ENCODE measurements at regions of chr3 and their contacts with region 1.

Region 1: DNA sequence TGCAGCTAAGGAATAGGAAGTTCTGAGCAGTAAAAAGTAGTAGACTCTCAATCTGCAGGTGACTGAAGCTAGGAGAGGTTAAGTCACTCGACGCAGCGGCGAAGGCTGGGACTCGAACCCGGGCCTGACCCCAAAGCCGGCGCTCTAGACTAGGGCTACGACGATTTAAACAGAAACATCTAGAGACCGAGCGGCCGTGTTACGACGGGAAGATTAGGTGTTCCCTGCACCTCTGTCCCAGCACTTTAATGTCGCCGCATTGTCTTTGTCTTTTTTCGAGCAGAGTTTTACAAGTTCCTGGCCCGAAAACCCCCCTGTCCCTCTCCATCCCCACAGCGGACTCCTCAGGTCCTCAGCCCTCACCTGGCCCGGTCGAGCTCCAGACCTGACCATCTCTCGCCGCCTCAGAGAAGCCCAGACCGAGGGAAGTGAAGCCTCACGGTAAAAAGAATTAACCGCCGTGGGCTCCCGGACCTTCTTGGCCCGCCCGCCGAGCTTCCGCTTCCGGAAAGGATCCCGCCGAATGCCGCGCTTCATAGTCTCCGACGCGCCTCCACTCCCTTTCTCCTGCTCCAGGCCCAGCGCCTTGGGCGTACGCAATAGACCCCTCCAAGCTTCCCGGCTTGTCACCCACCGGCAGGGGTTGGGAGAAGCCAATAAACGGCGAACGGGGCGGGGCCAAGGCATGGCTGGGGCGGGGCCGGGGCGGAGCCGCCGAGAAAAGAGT is at the start of gene CCDC14:
- DNase-seq: peak; percentile 92
- ATAC-seq: peak; percentile 99
- H3K4me3 ChIP-seq: peak within 1 kb of the TSS; percentile 69 to 92 (median 83)
- H3K27ac ChIP-seq: peak within 1 kb of the TSS; percentile 82
- H3K4me1 ChIP-seq: peaks cover 47% of the 10 kb centered on the region
- H3K27me3 ChIP-seq: peaks cover 0 to 3% of the 10 kb centered on the region in 2 experiments; a peak in 1 of 5 replicates
- CTCF ChIP-seq: no peak
- EP300 ChIP-seq: no peak
- POLR2A ChIP-seq: peak; percentile 73 to 75
- RAD21 ChIP-seq: no peak
- total RNA-seq, gene CCDC14: 21.1 and 48.7 TPM in 2 replicates

Region 2: DNA sequence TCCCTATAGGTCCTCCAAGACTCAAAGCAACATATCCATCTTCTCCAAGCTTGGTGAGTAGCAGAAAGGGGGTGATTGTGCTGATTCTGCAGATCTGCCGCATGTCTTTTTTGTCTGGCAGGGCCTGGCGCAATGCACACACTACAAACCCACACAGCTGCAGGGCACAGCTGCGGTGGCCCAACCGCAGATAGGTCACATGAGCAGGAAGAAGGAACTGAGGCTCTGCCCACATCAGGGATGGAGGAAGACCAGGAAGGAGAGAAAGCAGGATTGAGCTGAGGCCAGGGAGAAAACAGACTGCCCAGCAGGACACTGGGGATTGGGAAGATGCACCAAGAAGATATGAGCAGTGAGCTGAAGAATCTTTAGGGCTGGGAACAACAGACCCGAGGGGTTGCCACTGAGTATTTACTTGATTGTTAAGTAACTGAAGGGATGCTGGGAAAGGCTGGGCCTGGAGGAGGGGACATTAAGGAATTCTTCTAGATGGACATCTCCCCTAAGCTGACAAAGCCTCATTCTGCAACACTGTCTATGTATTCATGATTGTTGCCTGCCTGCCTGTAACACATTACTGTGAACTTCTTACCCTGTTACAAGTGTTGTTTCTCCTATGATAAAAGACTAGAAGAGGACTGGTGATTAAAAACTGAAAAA is 203.5 kb before region 1 on chr3:
- CTCF ChIA-PET with region 1: no interaction called
- POLR2A ChIA-PET with region 1: no interaction called
- in situ Hi-C with region 1: no loop called
- intact Hi-C with region 1: loop called (anchors 10 kb)
- DNase-seq: no peak
- ATAC-seq: no peak
- H3K4me3 ChIP-seq: no peak overlapping the region; a peak in 1 of 6 replicates
- H3K27ac ChIP-seq: peak overlapping the region; percentile 90
- H3K4me1 ChIP-seq: peaks cover 89% of the 10 kb centered on the region
- H3K27me3 ChIP-seq: no peaks in the 10 kb centered on the region
- CTCF ChIP-seq: no peak
- EP300 ChIP-seq: no peak
- POLR2A ChIP-seq: no peak
- RAD21 ChIP-seq: no peak

Region 3: DNA sequence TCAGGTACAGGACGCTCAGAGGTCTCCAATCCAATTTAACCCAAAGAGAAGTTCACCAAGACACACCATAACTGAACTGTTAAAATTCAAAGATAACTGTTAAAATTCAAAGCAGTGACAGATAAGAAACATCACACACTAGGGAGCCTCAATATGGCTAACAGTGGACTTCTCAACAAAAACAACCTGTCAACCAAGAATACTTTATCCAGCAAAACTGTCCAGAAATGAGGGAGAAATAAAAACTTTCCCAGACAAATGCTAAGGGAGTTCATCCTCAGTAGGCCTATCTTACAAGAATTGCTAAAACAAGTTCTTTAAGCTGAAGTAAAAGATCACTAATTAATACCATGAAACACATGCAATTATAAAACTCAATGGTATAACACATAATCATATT is 40.6 kb before region 1 on chr3:
- CTCF ChIA-PET with region 1: no interaction called
- POLR2A ChIA-PET with region 1: no interaction called
- in situ Hi-C with region 1: no loop called
- intact Hi-C with region 1: no loop called
- DNase-seq: no peak
- ATAC-seq: no peak
- H3K4me3 ChIP-seq: no peak overlapping the region
- H3K27ac ChIP-seq: no peak overlapping the region
- H3K4me1 ChIP-seq: no peaks in the 10 kb centered on the region
- H3K27me3 ChIP-seq: no peaks in the 10 kb centered on the region
- CTCF ChIP-seq: no peak
- EP300 ChIP-seq: no peak
- POLR2A ChIP-seq: no peak
- RAD21 ChIP-seq: no peak

Region 4: GRCh38 chr3:123986427-123986826 is 25.5 kb after region 1 on chr3:
- CTCF ChIA-PET with region 1: no interaction called
- POLR2A ChIA-PET with region 1: no interaction called
- in situ Hi-C with region 1: no loop called
- intact Hi-C with region 1: loop called (anchors 2 kb)
- DNase-seq: no peak
- ATAC-seq: no peak
- H3K4me3 ChIP-seq: no peak overlapping the region
- H3K27ac ChIP-seq: no peak overlapping the region
- H3K4me1 ChIP-seq: no peaks in the 10 kb centered on the region
- H3K27me3 ChIP-seq: peaks cover 0 to 17% of the 10 kb centered on the region in 2 experiments; a peak in 2 of 5 replicates
- CTCF ChIP-seq: no peak
- EP300 ChIP-seq: no peak
- POLR2A ChIP-seq: no peak
- RAD21 ChIP-seq: no peak

Region 5: DNA sequence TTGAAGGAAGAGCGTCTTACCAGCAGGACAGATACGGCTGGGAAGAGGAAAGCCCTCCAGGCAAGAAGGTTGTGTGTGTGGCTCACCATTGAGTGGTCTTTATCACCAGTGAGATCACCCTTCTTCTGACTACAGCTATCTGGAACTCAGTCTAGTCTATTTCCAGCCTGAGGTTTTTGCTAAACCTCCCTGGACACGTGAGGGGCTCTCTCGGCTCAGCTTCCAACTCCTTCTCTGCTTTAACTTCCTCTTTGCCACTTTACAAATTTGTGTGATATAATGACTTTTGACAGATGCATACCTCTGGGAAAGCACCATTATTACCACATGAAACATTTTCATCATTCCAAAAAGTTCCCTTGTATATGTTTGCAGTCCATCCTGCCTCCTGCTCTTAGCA is 46.2 kb after region 1 on chr3:
- CTCF ChIA-PET with region 1: no interaction called
- POLR2A ChIA-PET with region 1: no interaction called
- in situ Hi-C with region 1: no loop called
- intact Hi-C with region 1: no loop called
- DNase-seq: no peak
- ATAC-seq: no peak
- H3K4me3 ChIP-seq: no peak overlapping the region
- H3K27ac ChIP-seq: no peak overlapping the region
- H3K4me1 ChIP-seq: no peaks in the 10 kb centered on the region
- H3K27me3 ChIP-seq: peaks cover 1 to 3% of the 10 kb centered on the region in 2 experiments; a peak in 1 of 5 replicates
- CTCF ChIP-seq: no peak
- EP300 ChIP-seq: no peak
- POLR2A ChIP-seq: no peak
- RAD21 ChIP-seq: no peak